ENCODE measurements at regions of chr17 and their contacts with region 1.

Region 1: GRCh38 chr17:79515646-79516571 is 94.9 kb downstream of the RBFOX3 start:
- DNase-seq: no peak

Region 2: DNA sequence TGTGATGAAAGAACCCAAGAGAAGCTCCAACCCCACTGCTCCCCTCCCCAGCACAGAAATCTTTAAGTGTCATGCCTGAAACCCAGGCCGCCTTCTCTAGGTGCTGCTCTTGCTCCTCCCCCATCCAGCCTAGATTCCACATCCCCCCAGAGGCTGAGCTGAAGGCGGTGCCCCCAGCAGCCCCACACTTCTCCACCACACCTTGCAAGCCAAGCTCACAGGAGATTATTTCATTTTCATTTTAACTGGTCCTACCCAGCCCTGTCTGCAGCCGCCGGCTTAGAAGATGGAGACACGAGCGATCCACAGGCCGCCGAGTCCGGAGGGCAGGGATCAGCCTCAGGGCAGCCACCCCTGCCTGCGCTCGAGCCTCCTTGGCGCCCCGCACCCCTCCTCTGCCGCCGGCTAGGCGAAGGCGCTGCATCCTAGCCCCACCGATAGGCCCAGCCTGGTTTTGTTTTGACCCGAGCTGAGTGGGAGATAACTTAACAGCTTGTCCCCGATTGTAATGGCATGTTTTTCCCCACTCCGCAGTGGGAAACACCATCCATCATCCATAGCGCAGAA is 30.4 kb before region 1 on chr17:
- CTCF ChIA-PET with region 1: no interaction called
- POLR2A ChIA-PET with region 1: no interaction called
- DNase-seq: no peak

Region 3: DNA sequence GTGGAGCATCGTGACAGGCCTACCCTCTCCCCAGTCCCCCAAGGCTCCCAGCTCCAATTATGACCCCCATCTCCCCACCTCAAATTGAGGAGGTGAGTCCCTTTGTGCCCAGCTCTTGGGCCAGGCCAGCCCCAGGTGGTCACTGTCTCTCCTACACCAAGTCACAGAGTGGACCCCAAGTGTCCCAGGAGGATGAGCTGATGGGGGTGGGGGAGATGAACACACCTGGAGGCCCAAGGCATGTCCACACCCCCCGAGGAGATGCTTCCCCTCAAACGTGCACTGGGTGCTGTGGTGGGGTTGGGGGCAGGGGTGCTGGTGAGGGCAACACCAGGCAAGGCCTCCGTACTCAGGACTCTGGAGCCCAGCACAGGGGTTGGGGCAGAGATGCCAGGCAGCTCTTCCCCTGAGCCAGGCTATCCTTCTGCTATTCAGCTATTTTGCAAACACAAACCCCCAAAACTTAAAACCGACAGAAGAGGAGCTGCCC is 21.8 kb after region 1 on chr17:
- CTCF ChIA-PET with region 1: no interaction called
- POLR2A ChIA-PET with region 1: no interaction called
- DNase-seq: no peak

Region 4: DNA sequence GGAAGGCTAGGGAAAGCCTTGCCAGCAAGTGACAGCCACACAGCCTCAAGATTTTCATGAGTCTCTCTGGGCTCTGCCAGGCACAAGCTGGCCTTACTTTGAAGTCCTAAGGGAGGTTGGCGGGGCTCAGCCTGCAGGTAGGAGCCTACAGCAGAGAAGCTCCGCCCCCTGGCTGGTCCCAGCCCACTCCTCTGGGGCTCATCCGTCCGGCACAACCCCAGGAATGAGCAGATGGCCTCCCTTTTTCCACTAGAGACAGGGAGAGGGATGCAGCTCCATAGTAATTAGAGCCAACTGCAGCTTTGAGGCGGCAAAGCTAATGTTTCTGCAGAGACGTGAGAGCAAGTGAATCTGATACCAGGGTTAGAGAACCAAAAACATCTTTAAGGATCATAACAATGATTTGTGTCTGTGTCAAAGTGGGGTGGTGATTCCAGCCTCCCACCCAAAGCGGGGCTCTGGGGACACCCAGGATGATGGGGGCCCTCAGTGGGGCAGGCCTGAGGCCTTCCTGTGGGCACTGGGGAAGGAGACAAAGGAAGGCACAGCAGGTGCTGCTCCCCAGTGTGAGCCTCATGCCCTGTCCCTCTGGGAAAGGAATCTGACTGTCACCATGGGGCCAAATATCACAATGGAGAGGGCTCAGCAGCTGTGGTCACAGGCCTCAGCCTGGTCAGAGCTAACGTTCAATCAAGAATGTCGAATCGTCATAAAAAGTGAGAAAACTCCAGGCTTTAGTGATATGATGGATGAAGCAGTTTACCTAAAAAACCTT is 33.4 kb after region 1 on chr17:
- CTCF ChIA-PET with region 1: no interaction called
- POLR2A ChIA-PET with region 1: no interaction called
- DNase-seq: no peak

Region 5: DNA sequence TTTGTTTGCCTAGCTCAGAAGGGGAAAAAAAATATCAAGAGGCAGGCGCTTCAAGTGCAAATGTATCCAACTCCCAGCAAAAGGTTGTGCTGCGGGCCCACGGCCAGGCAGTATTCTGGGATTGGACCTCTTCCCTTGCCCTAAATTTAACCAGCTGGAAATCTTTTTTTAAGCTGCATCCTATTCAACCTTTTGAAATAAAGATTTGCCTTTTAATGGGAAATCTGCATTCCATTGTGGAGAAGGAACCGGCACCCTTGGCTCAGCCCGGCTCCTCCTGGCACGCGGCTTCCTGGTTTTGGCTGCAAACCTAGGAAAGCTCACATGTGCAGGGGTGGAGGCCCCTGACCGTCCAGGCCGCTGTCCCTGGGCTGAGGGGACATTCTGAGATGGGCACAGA is 176.0 kb after region 1 on chr17:
- CTCF ChIA-PET with region 1: interaction called, 11 read pairs
- POLR2A ChIA-PET with region 1: no interaction called
- DNase-seq: no peak

Measured in HEK293T (cell line).